HAP-1 (cell line): ENCODE measurements at regions of chr6 and their contacts with region 1.

Region 1: GRCh38 chr6:160455541-160456213 is 107.5 kb downstream of the SLC22A3 start:
- DNase-seq: peak; percentile 53 to 72
- H3K4me3 ChIP-seq: no peak overlapping the region
- H3K4me1 ChIP-seq: no peaks in the 10 kb centered on the region
- H3K27me3 ChIP-seq: 0 out of 2 replicates have a peak, but pooled peaks cover 3% of the 10 kb centered on the region

Region 2: GRCh38 chr6:159862103-159862502 is 593.6 kb before region 1 on chr6:
- in situ Hi-C with region 1: loop called (anchors 10 kb)
- DNase-seq: no peak
- H3K4me3 ChIP-seq: no peak overlapping the region
- H3K4me1 ChIP-seq: no peaks in the 10 kb centered on the region; the same call in 1 of the 2 replicates
- H3K27me3 ChIP-seq: peaks cover 9% of the 10 kb centered on the region

Region 3: DNA sequence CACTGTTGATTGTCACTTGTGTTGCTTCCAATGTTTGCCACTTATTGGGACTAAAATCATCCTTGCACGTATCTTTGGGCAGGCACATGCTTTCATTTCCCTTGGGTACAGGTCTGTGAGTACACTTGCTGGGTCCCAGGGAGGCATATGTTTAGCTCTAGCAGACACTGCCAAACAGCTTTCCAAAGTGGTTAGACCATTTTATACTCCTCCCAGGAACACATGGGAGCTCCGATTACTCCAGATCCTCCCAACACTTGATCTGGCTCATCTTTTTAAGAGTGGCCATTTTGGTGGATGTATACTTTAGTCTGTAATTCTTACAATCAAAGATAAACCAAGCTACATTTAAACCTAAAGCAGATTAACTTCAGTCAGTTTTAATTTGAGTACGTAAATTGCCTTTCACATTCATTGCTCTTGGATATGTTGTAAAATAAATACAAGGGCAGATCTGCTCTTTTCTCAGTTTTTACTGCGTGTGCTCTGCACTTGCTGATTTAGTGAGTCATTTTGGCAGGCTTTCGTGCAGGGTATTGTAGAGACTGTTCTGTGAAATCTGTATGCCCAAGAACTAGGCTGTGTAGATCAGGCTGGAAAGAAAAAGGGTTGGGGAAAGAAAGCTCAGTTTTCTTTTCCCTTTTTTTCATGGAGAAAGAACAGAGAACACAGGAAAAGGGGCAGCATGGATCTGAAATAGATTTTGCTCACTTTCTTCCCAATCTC is 314.5 kb before region 1 on chr6:
- in situ Hi-C with region 1: loop called (anchors 10 kb)
- DNase-seq: no peak
- H3K4me3 ChIP-seq: no peak overlapping the region
- H3K4me1 ChIP-seq: no peaks in the 10 kb centered on the region
- H3K27me3 ChIP-seq: no peaks in the 10 kb centered on the region